Dendritic cell treated with granulocyte-macrophage colony-stimulating factor and Interleukin-4, amounts not matched to agents 40 ng/mL and 50 ng/mL, for 4 days (primary cell): ENCODE measurements at regions of chr9 and their contacts with region 1.

Region 1: GRCh38 chr9:125143375-125144090 is at the start of gene SCAI:
- H3K4me3 Mint-ChIP-seq: peak within 1 kb of the TSS; percentile 98
- H3K27ac Mint-ChIP-seq: peak within 1 kb of the TSS; percentile 78
- H3K4me1 Mint-ChIP-seq: peaks cover 24% of the 10 kb centered on the region
- H3K27me3 Mint-ChIP-seq: no peaks in the 10 kb centered on the region

Region 2: GRCh38 chr9:124468061-124468740 is 675.3 kb before region 1 on chr9:
- intact Hi-C with region 1: no loop called
- H3K4me3 Mint-ChIP-seq: no peak overlapping the region
- H3K27ac Mint-ChIP-seq: no peak overlapping the region
- H3K4me1 Mint-ChIP-seq: no peaks in the 10 kb centered on the region
- H3K27me3 Mint-ChIP-seq: peaks cover 10% of the 10 kb centered on the region

Region 3: DNA sequence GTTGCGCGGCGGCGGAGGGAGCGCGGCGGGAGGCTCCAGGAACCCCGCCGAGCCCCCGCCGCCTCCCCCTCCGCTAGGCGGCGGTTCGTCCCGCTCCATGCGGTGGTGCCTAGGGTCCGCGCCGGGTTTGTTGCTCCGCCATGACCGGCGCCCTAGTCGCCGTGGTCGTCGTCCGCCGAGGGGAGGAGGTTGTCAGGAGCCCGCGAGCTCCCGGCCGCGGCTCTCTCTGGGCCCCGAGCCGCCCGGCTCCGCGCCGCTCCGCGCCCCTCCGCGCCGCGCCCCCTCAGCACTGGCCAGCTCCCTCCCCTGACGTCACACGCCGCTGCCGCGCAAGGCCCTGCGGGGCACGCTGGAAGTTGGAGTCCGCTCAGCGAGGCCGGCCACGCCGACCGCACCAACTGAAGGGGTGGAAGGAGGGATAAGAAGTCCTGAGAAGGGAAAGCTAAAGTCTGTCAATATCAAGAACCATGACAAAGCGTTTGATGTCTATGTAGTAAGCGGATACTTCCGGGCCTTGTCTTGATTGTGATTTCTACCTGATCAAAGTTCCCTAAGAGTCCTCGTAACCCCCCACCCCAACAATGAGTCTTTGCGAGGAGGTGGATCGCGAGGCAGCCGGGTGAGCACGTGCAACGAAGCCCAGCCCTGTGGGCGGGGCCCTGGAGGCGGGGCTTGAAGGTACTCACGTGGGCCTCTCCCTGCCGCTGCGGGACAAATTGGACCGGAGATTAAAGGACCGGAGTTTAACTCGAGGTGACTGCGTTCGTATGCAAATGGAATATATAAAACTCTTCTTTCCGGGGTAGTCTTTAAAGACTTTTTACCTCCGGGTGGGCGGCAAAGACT is 372.3 kb before region 1 on chr9 and contains the start of gene NR6A1:
- intact Hi-C with region 1: loop called (anchors 2 kb)
- H3K4me3 Mint-ChIP-seq: peak within 1 kb of the TSS; percentile 92
- H3K27ac Mint-ChIP-seq: peak within 1 kb of the TSS; percentile 97
- H3K4me1 Mint-ChIP-seq: peaks cover 55% of the 10 kb centered on the region
- H3K27me3 Mint-ChIP-seq: peaks cover 30% of the 10 kb centered on the region

Region 4: DNA sequence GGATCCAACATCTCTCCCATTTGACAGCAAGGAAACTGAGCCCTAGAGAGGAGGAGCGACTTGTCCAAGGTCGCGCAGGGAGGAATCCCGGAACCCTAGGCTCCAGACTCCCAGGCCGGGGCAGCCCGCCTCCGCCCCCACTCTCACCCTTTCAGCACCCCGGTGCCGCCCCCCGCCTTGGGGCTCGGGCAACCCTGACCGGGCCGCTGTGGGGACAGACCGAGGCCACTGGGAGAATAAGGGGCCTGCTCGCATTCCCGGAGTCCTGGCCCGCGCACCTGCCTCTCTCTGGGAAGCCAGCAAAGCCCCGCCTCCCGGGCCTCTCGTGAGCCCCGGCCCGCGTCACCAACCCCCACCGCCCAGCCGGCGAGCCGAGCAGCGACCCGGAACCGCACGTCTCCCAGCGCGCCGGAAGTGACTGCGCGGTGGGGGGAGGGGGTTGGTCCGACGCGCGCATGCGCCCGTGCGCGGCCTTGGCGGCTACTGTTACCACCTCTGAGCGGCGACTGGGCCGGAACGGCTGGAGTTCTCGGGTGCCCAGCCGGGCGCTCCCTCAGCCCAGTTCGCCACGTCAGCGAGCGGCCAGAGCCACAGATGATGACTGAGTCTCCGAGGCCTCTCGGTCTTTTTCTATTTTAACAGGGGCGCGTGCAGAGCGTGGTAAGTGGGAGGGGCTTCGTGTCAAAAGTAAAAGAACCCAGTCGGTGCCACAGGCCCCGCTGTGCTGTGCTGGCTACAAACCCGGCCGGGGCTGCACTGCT is 202.7 kb before region 1 on chr9 and contains the start of gene GOLGA1:
- intact Hi-C with region 1: loop called (anchors 1 kb)
- H3K4me3 Mint-ChIP-seq: peak within 1 kb of the TSS; percentile 97
- H3K27ac Mint-ChIP-seq: peak within 1 kb of the TSS; percentile 98
- H3K4me1 Mint-ChIP-seq: peaks cover 24% of the 10 kb centered on the region
- H3K27me3 Mint-ChIP-seq: no peaks in the 10 kb centered on the region